Astrocyte of the cerebellum (primary cell): ENCODE measurements at regions of chr20 and their contacts with region 1.

Region 1: GRCh38 chr20:4585104-4585753 is 136.5 kb upstream of the PRND start:
- DNase-seq: no peak
- H3K4me3 ChIP-seq: no peak overlapping the region
- CTCF ChIP-seq: no peak

Region 2: GRCh38 chr20:4256874-4257273 is 328.4 kb before region 1 on chr20:
- in situ Hi-C with region 1: loop called (anchors 10 kb)
- DNase-seq: no peak
- H3K4me3 ChIP-seq: no peak overlapping the region
- CTCF ChIP-seq: no peak

Region 3: GRCh38 chr20:4401601-4402000 is 183.6 kb before region 1 on chr20:
- in situ Hi-C with region 1: no loop called
- DNase-seq: no peak
- H3K4me3 ChIP-seq: no peak overlapping the region
- CTCF ChIP-seq: no peak

Region 4: GRCh38 chr20:4457566-4458543 is 127.4 kb before region 1 on chr20:
- in situ Hi-C with region 1: loop called (anchors 5 kb)
- DNase-seq: no peak
- H3K4me3 ChIP-seq: no peak overlapping the region
- CTCF ChIP-seq: no peak